ENCODE measurements at regions of chr12 and their contacts with region 1.

Region 1: GRCh38 chr12:80837348-80837985 is 100.3 kb downstream of the LIN7A start:
- DNase-seq: peak in 1 of 3 donors; percentile 21
- ATAC-seq: peak; percentile 75 to 89
- H3K4me3 ChIP-seq: no peak overlapping the region
- H3K27ac ChIP-seq: no peak overlapping the region
- H3K4me1 ChIP-seq: peaks cover 1% of the 10 kb centered on the region
- H3K27me3 ChIP-seq: no peaks in the 10 kb centered on the region

Region 2: GRCh38 chr12:80582431-80582830 is 255.0 kb before region 1 on chr12:
- intact Hi-C with region 1: no loop called
- DNase-seq: no peak
- ATAC-seq: no peak
- H3K4me3 ChIP-seq: no peak overlapping the region
- H3K27ac ChIP-seq: no peak overlapping the region
- H3K4me1 ChIP-seq: no peaks in the 10 kb centered on the region
- H3K27me3 ChIP-seq: no peaks in the 10 kb centered on the region

Region 3: GRCh38 chr12:80936498-80937390 is 99.3 kb after region 1 on chr12:
- intact Hi-C with region 1: loop called in 3 of 4 experiments (anchors 5 to 10 kb)
- DNase-seq: peak; percentile 40 to 77 (median 77)
- ATAC-seq: peak; percentile 86 to 87
- H3K4me3 ChIP-seq: peak overlapping the region; percentile 77
- H3K27ac ChIP-seq: peak overlapping the region; percentile 77
- H3K4me1 ChIP-seq: no peaks in the 10 kb centered on the region
- H3K27me3 ChIP-seq: no peaks in the 10 kb centered on the region

Region 4: DNA sequence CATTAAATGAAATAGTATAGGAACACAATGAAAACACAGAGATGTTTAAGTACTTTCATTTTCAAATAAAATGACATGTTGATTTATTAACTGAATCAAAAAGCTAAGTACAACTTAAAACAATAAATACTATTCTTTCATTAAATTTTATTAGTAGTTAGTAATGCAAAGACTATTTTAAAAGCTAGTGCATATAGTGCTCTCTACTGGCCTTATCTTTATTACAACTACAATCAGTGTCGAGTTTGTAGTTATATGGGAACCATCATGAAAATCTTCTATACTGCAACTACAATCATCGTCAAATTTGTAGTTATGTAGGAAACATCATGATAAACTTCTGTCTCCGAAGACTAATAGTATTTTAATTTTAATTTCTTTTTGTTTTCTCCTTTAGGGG is 109.1 kb after region 1 on chr12:
- intact Hi-C with region 1: loop called in 1 of 4 experiments (anchors 5 kb)
- DNase-seq: no peak
- ATAC-seq: no peak
- H3K4me3 ChIP-seq: no peak overlapping the region
- H3K27ac ChIP-seq: no peak overlapping the region
- H3K4me1 ChIP-seq: no peaks in the 10 kb centered on the region
- H3K27me3 ChIP-seq: no peaks in the 10 kb centered on the region